Right ventricle myocardium inferior (tissue), 1 donor: ENCODE measurements at regions of chr9 and their contacts with region 1.

Region 1: DNA sequence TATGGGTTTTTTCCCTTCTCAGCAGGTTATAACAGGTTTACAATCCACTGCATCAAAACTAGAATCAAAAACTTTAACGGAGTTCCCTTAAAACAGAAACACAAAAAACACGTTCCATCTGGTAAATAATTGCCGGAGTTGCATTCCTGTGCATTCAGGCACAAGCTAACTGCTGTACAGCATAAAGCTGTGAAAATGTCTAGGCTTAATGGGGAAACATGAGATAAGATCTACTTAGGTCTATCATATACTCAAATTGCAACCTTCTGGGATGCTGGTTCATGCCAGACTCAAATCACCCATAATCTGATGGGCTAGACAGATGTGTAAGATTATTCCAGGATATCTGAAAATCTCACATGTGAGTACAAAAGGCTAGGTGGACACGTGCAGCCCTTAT is 265.3 kb downstream of the DOCK8 start:
- DNase-seq: no peak
- ATAC-seq: no peak

Region 2: GRCh38 chr9:437574-438001 is 42.4 kb before region 1 on chr9:
- intact Hi-C with region 1: loop called (anchors 5 kb)
- DNase-seq: no peak
- ATAC-seq: peak; percentile 83

Region 3: DNA sequence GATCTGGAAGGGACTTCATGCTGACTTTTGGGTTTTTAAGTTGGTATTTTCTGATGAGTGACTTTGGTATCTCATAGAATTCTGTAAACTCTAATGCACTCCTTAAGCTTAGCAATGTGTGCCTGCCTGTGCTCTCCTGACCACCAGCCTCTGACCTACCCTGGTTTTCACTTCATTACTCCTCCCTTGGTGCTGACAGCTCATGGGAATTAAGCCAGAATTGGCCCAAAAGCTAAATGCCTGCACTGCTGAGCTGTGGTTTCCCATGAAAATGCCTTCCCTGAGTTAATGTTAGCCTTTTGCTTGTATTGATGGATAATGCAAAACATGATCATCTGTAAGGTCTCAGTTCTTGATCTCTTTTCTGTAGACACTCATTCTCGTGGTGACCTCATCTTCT is 42.7 kb after region 1 on chr9:
- intact Hi-C with region 1: no loop called
- DNase-seq: no peak
- ATAC-seq: peak; percentile 85